ENCODE measurements at regions of chr15 and their contacts with region 1.

Region 1: DNA sequence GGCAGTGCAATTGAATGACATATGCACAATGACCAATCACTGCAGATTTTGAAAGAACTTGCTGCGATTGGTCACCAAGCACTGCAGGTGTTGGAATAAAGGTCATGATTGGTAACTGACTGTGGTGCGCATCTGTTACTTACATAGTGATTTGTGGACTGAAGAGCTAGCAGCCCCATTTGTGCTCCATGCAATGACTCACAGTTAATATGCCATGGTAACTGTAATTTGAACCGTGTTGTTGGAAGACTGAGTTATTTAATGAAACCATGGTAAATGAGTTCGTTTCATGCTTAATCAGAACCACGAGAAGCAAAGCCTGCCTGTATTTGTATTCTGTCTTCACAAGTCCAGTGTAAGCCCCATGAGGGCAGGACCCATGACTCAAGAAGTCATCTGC is 220.5 kb downstream of the TJP1 start:
- DNase-seq: no peak
- ATAC-seq: no peak
- H3K4me3 ChIP-seq: no peak overlapping the region
- H3K27ac ChIP-seq: no peak overlapping the region
- H3K4me1 ChIP-seq: no peaks in the 10 kb centered on the region
- H3K27me3 ChIP-seq: no peaks in the 10 kb centered on the region
- CTCF ChIP-seq: no peak
- POLR2A ChIP-seq: no peak

Region 2: DNA sequence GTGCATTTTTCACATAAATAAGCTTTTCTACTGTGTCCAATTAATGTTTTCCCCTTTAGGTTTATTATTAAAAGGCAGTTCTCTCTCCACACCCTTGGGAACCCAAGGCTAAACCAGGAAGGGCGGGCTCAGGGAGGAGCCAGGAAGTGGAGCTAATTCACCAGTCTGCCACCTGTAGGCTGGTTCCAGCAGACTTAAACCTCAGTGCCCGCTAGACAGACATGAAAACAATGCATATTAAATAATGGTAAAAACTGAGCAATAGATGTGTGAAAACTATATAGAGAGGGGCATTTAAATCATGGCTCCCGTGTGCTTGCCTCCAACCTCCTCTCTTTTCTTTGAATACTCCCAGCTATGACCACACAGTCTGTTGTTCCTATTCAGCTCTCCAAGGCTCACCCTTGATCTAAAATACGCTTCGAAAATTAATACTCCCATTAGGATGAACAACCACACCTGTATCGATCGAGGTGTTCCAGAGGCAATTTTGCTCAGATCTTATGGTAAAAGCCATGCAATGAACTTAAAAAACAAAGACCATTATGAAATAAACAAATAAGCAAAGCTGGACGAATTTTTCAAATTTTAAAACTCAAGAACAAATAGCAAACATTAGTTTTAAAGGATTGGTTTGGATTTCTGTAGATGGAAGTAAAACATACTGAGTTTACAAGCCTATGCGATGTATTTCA is 32.8 kb before region 1 on chr15:
- intact Hi-C with region 1: loop called in 1 of 10 experiments (anchors 2 kb)
- DNase-seq: peak in 1 of 5 donors; percentile 37
- ATAC-seq: peak in 2 of 4 donors; percentile 55 to 68
- H3K4me3 ChIP-seq: no peak overlapping the region
- H3K27ac ChIP-seq: no peak overlapping the region
- H3K4me1 ChIP-seq: peaks cover 0 to 28% (median 7%) of the 10 kb centered on the region in 12 donors
- H3K27me3 ChIP-seq: peaks cover 25 to 81% (median 47%) of the 10 kb centered on the region in 9 donors
- CTCF ChIP-seq: peak in 7 of 12 donors; percentile 9 to 36 (median 18)
- POLR2A ChIP-seq: no peak

Region 3: GRCh38 chr15:29668120-29668602 is 66.3 kb after region 1 on chr15:
- intact Hi-C with region 1: no loop called
- DNase-seq: peak; percentile 55 to 73 (median 71)
- ATAC-seq: peak; percentile 80 to 95 (median 92)
- H3K4me3 ChIP-seq: no peak overlapping the region
- H3K27ac ChIP-seq: no peak overlapping the region
- H3K4me1 ChIP-seq: no peaks in the 10 kb centered on the region
- H3K27me3 ChIP-seq: peaks cover 0 to 3% (median 0%) of the 10 kb centered on the region in 9 donors
- CTCF ChIP-seq: peak; percentile 56 to 89 (median 80)
- POLR2A ChIP-seq: no peak